T-cell (primary cell): ENCODE measurements at regions of chr13 and their contacts with region 1.

Region 1: GRCh38 chr13:30114571-30115256 is 192.6 kb downstream of the KATNAL1 start:
- DNase-seq: peak; percentile 78 to 96 (median 91)
- ATAC-seq: peak; percentile 89 to 95 (median 94)
- H3K4me3 ChIP-seq: peak overlapping the region; percentile 38 to 47
- H3K4me3 Mint-ChIP-seq: peak overlapping the region; percentile 79 to 80 (median 79)
- H3K27ac ChIP-seq: peak overlapping the region; percentile 37
- H3K27ac Mint-ChIP-seq: peak overlapping the region; percentile 49 to 82
- H3K4me1 ChIP-seq: peaks cover 10 to 26% of the 10 kb centered on the region in 2 experiments
- H3K4me1 Mint-ChIP-seq: peaks cover 30 to 38% (median 38%) of the 10 kb centered on the region in 3 donors
- H3K27me3 ChIP-seq: peaks cover 0 to 2% of the 10 kb centered on the region in 2 experiments
- H3K27me3 Mint-ChIP-seq: no peaks in the 10 kb centered on the region

Region 2: GRCh38 chr13:29508130-29508875 is 606.4 kb before region 1 on chr13:
- CTCF ChIA-PET with region 1: interaction called, 4 to 15 read pairs
- POLR2A ChIA-PET with region 1: no interaction called
- DNase-seq: peak; percentile 15 to 83 (median 61)
- ATAC-seq: peak; percentile 63 to 75 (median 72)
- H3K4me3 ChIP-seq: no peak overlapping the region
- H3K4me3 Mint-ChIP-seq: no peak overlapping the region
- H3K27ac ChIP-seq: no peak overlapping the region
- H3K27ac Mint-ChIP-seq: no peak overlapping the region
- H3K4me1 ChIP-seq: no peaks in the 10 kb centered on the region
- H3K4me1 Mint-ChIP-seq: peaks cover 0 to 2% (median 0%) of the 10 kb centered on the region in 3 donors
- H3K27me3 ChIP-seq: peaks cover 0 to 18% of the 10 kb centered on the region in 2 experiments
- H3K27me3 Mint-ChIP-seq: peaks cover 6 to 12% of the 10 kb centered on the region in 2 donors

Region 3: GRCh38 chr13:29840585-29840984 is 274.1 kb before region 1 on chr13:
- CTCF ChIA-PET with region 1: interaction called, 12 to 94 read pairs
- POLR2A ChIA-PET with region 1: no interaction called
- DNase-seq: no peak
- ATAC-seq: no peak
- H3K4me3 ChIP-seq: no peak overlapping the region
- H3K4me3 Mint-ChIP-seq: no peak overlapping the region
- H3K27ac ChIP-seq: no peak overlapping the region
- H3K27ac Mint-ChIP-seq: no peak overlapping the region
- H3K4me1 ChIP-seq: peaks cover 3 to 6% of the 10 kb centered on the region in 2 experiments
- H3K4me1 Mint-ChIP-seq: peaks cover 78 to 87% (median 84%) of the 10 kb centered on the region in 3 donors
- H3K27me3 ChIP-seq: no peaks in the 10 kb centered on the region
- H3K27me3 Mint-ChIP-seq: no peaks in the 10 kb centered on the region

Region 4: GRCh38 chr13:29850224-29850898 is 264.4 kb before region 1 on chr13 and contains the start of gene UBL3:
- CTCF ChIA-PET with region 1: interaction called, 10 to 94 read pairs
- POLR2A ChIA-PET with region 1: interaction called, 3 to 5 read pairs
- DNase-seq: peak; percentile 86 to 97 (median 94)
- ATAC-seq: peak; percentile 92 to 94 (median 92)
- H3K4me3 ChIP-seq: peak within 1 kb of the TSS; percentile 96 to 99
- H3K4me3 Mint-ChIP-seq: peak within 1 kb of the TSS; percentile 93 to 98 (median 97)
- H3K27ac ChIP-seq: peak within 1 kb of the TSS; percentile 94
- H3K27ac Mint-ChIP-seq: peak within 1 kb of the TSS; percentile 98 to 99
- H3K4me1 ChIP-seq: peaks cover 0 to 17% of the 10 kb centered on the region in 2 experiments
- H3K4me1 Mint-ChIP-seq: peaks cover 31 to 33% (median 31%) of the 10 kb centered on the region in 3 donors
- H3K27me3 ChIP-seq: no peaks in the 10 kb centered on the region
- H3K27me3 Mint-ChIP-seq: no peaks in the 10 kb centered on the region
- total RNA-seq, gene UBL3: 32.7 to 42.1 (median 34.6) TPM

Region 5: DNA sequence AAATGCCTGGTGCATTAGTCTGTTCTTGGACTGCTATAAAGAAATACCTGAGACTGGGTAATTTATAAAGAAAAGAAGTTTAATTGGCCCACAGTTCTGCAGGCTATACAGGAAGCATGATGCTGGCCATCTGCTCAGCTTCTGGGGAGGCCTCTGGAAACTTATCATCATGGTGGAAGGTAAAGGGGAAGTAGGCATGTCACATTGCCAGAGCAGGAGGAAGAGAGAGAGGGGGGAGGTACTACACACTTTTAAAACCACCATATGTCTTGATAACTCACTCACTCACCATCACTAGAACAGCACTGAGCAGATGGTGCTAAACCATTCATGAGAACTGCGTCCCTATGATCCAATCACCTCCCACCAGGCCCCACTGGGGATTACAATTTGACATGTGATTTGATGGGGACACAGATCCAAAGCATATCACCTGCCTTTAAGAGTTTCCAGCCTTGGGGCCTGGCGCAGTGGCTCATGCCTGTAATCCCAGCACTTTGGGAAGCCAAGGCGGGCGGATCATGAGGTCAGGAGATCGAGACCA is 26.3 kb before region 1 on chr13:
- CTCF ChIA-PET with region 1: no interaction called
- POLR2A ChIA-PET with region 1: no interaction called
- DNase-seq: no peak
- ATAC-seq: no peak
- H3K4me3 ChIP-seq: no peak overlapping the region
- H3K4me3 Mint-ChIP-seq: no peak overlapping the region
- H3K27ac ChIP-seq: no peak overlapping the region
- H3K27ac Mint-ChIP-seq: no peak overlapping the region
- H3K4me1 ChIP-seq: no peaks in the 10 kb centered on the region
- H3K4me1 Mint-ChIP-seq: no peaks in the 10 kb centered on the region
- H3K27me3 ChIP-seq: no peaks in the 10 kb centered on the region
- H3K27me3 Mint-ChIP-seq: peaks cover 0 to 1% of the 10 kb centered on the region in 2 donors

Region 6: GRCh38 chr13:30145709-30146367 is 31.1 kb after region 1 on chr13:
- CTCF ChIA-PET with region 1: interaction called in 1 of 2 experiments, 10 read pairs
- POLR2A ChIA-PET with region 1: no interaction called
- DNase-seq: no peak
- ATAC-seq: no peak
- H3K4me3 ChIP-seq: no peak overlapping the region
- H3K4me3 Mint-ChIP-seq: peak overlapping the region in 2 of 3 donors; percentile 19 to 67
- H3K27ac ChIP-seq: peak overlapping the region; percentile 89
- H3K27ac Mint-ChIP-seq: peak overlapping the region; percentile 96 to 97
- H3K4me1 ChIP-seq: peaks cover 44 to 91% of the 10 kb centered on the region in 2 experiments
- H3K4me1 Mint-ChIP-seq: peaks cover 89 to 96% (median 90%) of the 10 kb centered on the region in 3 donors
- H3K27me3 ChIP-seq: no peaks in the 10 kb centered on the region
- H3K27me3 Mint-ChIP-seq: no peaks in the 10 kb centered on the region